ENCODE measurements at regions of chr11 and their contacts with region 1.

Region 1: GRCh38 chr11:95067039-95067840 is 521 bp downstream of the SRSF8 start:
- DNase-seq: peak; percentile 74
- H3K4me3 ChIP-seq: peak overlapping the region; percentile 86 to 99 (median 96)
- H3K27ac ChIP-seq: peak overlapping the region; percentile 90
- H3K4me1 ChIP-seq: peaks cover 30% of the 10 kb centered on the region
- H3K27me3 ChIP-seq: no peaks in the 10 kb centered on the region
- CTCF ChIP-seq: peak; percentile 10 to 62

Region 2: DNA sequence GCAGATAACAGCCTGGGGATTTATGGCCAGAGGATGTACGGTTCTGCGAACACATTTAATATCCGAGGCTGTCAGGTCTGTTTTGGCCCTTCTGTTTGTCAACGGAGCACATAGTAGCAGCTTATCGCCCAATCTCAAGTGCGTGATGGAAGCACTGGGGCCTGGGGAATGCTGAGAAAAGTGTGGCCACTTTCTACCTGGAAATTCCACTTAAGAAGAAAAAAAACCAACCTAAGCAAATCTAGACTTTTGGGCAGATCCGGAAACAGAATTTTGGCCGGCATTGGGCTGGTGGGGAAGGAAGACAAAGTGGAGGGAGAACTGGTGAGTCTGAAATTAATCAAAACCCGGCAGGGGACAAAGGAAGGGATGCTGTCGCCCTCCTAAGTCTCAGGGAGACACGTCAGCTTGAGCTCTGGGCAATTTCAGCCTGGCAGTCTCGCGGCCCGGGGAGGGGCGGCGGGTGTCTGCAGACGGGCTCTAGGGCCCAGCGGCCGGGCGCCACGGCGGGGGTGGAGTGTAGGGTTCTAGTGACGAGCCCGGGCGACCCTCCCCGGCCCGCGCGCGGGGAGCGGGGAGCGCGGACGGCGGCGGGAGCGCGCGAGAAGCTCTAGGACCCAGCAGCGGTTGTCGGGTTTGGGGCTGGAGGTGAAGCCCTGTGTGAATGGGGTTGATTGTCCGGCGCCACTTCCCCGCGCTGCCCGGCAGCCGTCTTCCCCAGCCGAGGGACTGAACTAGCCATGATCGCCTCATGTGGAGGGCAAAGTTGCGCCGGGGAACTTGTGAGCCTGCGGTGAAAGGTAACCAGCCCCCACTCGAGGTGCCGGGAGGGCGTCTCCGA is 299.3 kb before region 1 on chr11 and contains the start of gene AMOTL1:
- CTCF ChIA-PET with region 1: no interaction called
- dilution Hi-C with region 1: no loop called
- in situ Hi-C with region 1: no loop called
- intact Hi-C with region 1: loop called (anchors 2 kb)
- DNase-seq: peak; percentile 87
- H3K4me3 ChIP-seq: peak within 1 kb of the TSS; percentile 52 to 89 (median 64)
- H3K27ac ChIP-seq: peak within 1 kb of the TSS; percentile 91
- H3K4me1 ChIP-seq: peaks cover 47% of the 10 kb centered on the region
- H3K27me3 ChIP-seq: no peaks in the 10 kb centered on the region
- CTCF ChIP-seq: peak in 1 of 2 donors; percentile 23
- total RNA-seq, gene AMOTL1: 181 to 201 TPM

Region 3: GRCh38 chr11:95084509-95084908 is 17.3 kb after region 1 on chr11:
- CTCF ChIA-PET with region 1: interaction called, 3 read pairs
- dilution Hi-C with region 1: no loop called
- in situ Hi-C with region 1: no loop called
- intact Hi-C with region 1: loop called (anchors 2 kb)
- DNase-seq: peak; percentile 89
- H3K4me3 ChIP-seq: no peak overlapping the region
- H3K27ac ChIP-seq: peak overlapping the region; percentile 67
- H3K4me1 ChIP-seq: peaks cover 22% of the 10 kb centered on the region
- H3K27me3 ChIP-seq: no peaks in the 10 kb centered on the region
- CTCF ChIP-seq: no peak

Region 4: DNA sequence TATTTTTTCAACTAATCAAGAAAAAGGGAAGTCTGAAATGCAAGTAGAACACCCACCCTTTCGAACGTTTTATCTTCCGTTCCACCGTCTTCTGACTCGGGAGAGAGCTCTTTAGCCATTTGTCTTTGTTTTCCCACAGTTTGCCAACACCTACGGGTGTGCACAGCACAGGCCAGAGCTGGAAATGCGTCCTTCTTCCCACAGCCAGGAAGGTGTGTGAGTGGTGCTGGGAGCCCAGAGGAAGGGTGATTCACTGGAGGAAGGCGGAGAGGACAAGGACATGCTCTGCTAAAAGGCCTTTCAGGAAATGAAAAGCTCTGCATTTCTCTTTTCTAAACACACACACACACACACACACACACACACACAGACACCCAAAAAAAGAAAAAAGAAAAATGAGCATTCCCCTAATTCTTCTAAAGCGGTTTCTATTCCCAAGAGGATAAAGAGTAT is 40.9 kb after region 1 on chr11:
- CTCF ChIA-PET with region 1: no interaction called
- dilution Hi-C with region 1: no loop called
- in situ Hi-C with region 1: no loop called
- intact Hi-C with region 1: loop called (anchors 1 kb)
- DNase-seq: peak; percentile 83
- H3K4me3 ChIP-seq: no peak overlapping the region
- H3K27ac ChIP-seq: peak overlapping the region; percentile 22
- H3K4me1 ChIP-seq: peaks cover 34% of the 10 kb centered on the region
- H3K27me3 ChIP-seq: no peaks in the 10 kb centered on the region
- CTCF ChIP-seq: no peak

Region 5: GRCh38 chr11:95140397-95141033 is 73.3 kb after region 1 on chr11:
- CTCF ChIA-PET with region 1: no interaction called
- dilution Hi-C with region 1: loop called (anchors 5 kb)
- in situ Hi-C with region 1: loop called (anchors 5 to 10 kb)
- intact Hi-C with region 1: no loop called
- DNase-seq: peak; percentile 69
- H3K4me3 ChIP-seq: no peak overlapping the region
- H3K27ac ChIP-seq: no peak overlapping the region
- H3K4me1 ChIP-seq: peaks cover under 1% of the 10 kb centered on the region
- H3K27me3 ChIP-seq: no peaks in the 10 kb centered on the region
- CTCF ChIP-seq: no peak

Region 6: GRCh38 chr11:95764267-95764898 is 697.1 kb after region 1 on chr11:
- CTCF ChIA-PET with region 1: no interaction called
- dilution Hi-C with region 1: no loop called
- in situ Hi-C with region 1: loop called in 1 of 2 experiments (anchors 10 kb)
- intact Hi-C with region 1: loop called (anchors 2 kb)
- DNase-seq: peak; percentile 37
- H3K4me3 ChIP-seq: no peak overlapping the region
- H3K27ac ChIP-seq: no peak overlapping the region
- H3K4me1 ChIP-seq: peaks cover 8% of the 10 kb centered on the region
- H3K27me3 ChIP-seq: no peaks in the 10 kb centered on the region
- CTCF ChIP-seq: peak; percentile 45 to 61